Activated T-helper 2 cell treated with anti-CD3 and anti-CD28 coated beads, Interferon-gamma antibody, Interleukin-2, Interleukin-4, amounts not matched to agents 10 μg/mL and 5 μg/mL and 100 μg/mL, durations not matched to agents 14 hours and 24 hours and 36 hours (primary cell): ENCODE measurements at regions of chr17 and their contacts with region 1.

Region 1: DNA sequence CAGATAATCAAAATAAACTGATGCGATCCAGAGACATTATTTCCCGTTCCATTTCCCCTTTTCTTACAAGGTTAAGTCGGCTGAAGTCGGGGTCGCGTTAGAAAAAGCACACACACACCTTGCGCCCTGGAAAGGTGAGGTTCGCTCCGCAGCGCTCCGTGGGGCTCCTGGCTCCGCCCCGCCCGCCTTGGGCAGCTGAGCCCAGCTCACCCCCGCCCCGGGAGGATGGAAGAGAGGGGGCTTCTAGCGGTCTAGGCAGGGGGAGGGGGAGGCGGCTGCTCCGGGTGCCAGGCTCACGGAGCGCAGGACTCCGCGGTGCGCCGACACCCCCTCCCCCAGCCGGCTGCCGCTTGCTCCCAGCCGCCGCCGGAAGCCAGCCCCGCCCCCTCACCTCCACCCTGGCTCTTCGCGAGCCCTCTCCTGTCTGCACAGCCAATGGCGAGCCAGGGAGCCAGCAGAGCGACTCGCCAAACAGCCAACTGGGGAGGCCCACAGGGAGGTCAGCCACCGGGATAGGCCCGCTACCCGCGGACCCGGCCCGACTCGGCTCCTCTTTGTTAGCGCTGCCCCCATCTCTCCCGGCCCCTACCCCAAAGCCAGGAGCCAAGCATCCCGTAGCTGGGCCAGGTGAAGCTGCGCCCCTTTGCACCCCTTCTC is 30.4 kb downstream of the FAM222B start:
- DNase-seq: peak; percentile 95
- H3K4me3 Mint-ChIP-seq: peak overlapping the region; percentile 92
- H3K27ac Mint-ChIP-seq: peak overlapping the region; percentile 91
- H3K4me1 Mint-ChIP-seq: peaks cover 33% of the 10 kb centered on the region
- H3K27me3 Mint-ChIP-seq: no peaks in the 10 kb centered on the region

Region 2: GRCh38 chr17:28763804-28764266 is 48.4 kb before region 1 on chr17:
- intact Hi-C with region 1: loop called (anchors 5 kb)
- DNase-seq: peak; percentile 60
- H3K4me3 Mint-ChIP-seq: no peak overlapping the region
- H3K27ac Mint-ChIP-seq: no peak overlapping the region
- H3K4me1 Mint-ChIP-seq: peaks cover 13% of the 10 kb centered on the region
- H3K27me3 Mint-ChIP-seq: no peaks in the 10 kb centered on the region

Region 3: DNA sequence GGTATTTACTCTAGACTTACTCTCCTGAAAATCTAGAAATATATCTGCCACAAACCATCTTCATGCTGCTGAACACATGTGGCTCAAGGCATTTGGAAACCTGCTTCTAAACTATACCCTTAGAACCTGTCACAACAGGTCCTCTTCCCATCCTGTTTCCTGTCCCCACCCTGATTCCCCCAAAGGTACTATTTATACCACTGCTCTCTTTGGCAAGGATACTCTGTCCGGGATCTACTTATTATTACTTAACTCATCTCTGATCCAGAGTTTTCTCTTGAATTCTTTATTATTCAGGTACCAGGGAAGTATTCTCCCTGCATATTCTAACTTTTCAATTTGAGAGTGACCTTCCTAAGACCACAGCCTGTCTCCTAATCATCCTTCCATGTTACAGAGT is 35.0 kb before region 1 on chr17:
- intact Hi-C with region 1: loop called (anchors 5 kb)
- DNase-seq: no peak
- H3K4me3 Mint-ChIP-seq: no peak overlapping the region
- H3K27ac Mint-ChIP-seq: no peak overlapping the region
- H3K4me1 Mint-ChIP-seq: peaks cover 22% of the 10 kb centered on the region
- H3K27me3 Mint-ChIP-seq: no peaks in the 10 kb centered on the region

Region 4: DNA sequence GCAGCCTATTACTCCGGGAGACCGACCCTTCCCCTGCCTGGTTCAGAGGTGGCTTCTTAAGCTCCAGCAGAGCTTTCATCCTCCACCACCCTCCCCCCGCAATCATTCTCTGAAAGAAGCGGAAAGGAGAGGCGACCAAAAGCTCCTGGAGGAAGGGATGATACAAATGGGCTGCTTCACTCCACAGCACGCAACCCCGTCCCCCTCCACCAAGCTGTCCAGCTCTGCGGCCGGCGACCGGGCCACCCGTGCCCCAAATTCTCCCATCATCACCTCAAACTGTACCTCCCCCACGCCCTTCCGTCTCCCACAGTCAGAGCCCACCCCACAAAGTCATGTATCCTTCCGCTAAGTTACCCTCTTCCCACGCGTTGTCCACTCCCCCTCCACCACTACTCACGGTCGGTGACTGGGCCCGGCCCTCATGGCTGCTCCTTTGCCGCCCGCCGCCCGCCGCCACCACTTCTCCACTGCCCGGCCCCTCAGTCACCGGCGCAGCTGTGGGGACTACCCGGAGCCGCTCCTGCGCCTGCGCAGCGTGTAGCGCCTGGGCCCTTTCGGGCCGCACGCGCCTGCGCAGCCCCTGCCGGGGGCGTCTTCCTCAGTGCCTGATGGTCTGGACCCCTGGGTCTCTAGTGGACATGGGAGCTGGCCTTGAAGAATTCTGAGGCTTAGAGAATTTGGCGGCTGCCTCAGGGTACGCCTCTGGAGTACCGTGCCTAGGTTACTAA is 30.2 kb after region 1 on chr17 and contains the start of gene FAM222B:
- intact Hi-C with region 1: loop called (anchors 2 kb)
- DNase-seq: peak; percentile 84
- H3K4me3 Mint-ChIP-seq: peak within 1 kb of the TSS; percentile 98
- H3K27ac Mint-ChIP-seq: peak within 1 kb of the TSS; percentile 96
- H3K4me1 Mint-ChIP-seq: peaks cover 19% of the 10 kb centered on the region
- H3K27me3 Mint-ChIP-seq: no peaks in the 10 kb centered on the region
- total RNA-seq, gene FAM222B: 19.6 and 23.0 TPM in 2 replicates

Region 5: GRCh38 chr17:28902819-28903545 is 90.8 kb after region 1 on chr17 and contains the start of gene DHRS13:
- intact Hi-C with region 1: loop called (anchors 2 kb)
- DNase-seq: peak; percentile 91
- H3K4me3 Mint-ChIP-seq: peak within 1 kb of the TSS; percentile 90
- H3K27ac Mint-ChIP-seq: peak within 1 kb of the TSS; percentile 86
- H3K4me1 Mint-ChIP-seq: peaks cover 32% of the 10 kb centered on the region
- H3K27me3 Mint-ChIP-seq: no peaks in the 10 kb centered on the region
- total RNA-seq, gene DHRS13: 30.6 and 32.9 TPM in 2 replicates

Region 6: GRCh38 chr17:28951991-28952975 is 140.1 kb after region 1 on chr17:
- intact Hi-C with region 1: loop called (anchors 5 kb)
- DNase-seq: peak; percentile 95
- H3K4me3 Mint-ChIP-seq: no peak overlapping the region
- H3K27ac Mint-ChIP-seq: no peak overlapping the region
- H3K4me1 Mint-ChIP-seq: peaks cover 9% of the 10 kb centered on the region
- H3K27me3 Mint-ChIP-seq: no peaks in the 10 kb centered on the region